Left colon (tissue), 2 donors: ENCODE measurements at regions of chr5 and their contacts with region 1.

Region 1: DNA sequence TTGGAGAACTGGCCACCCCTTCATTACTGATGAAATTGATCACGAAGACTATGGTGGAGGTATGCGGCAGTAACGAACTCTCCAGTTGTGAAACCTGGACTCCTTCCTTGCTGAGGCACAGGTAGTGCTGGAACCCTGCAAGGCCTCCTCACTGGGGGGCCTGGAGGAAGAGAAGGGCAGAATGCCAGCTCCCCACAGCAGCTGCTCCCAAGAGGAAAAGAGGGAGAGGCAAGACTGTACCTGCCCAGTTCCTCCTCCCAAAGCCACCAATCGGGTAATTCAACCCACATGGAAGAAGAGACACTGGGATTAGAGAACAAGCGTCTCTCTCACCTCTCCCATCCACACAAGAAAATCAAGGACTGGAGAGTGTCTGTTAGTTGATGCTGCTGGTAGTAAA is 19.1 kb upstream of the TRIO start:
- DNase-seq: no peak
- ATAC-seq: no peak

Region 2: GRCh38 chr5:14174230-14174637 is 50.2 kb after region 1 on chr5:
- intact Hi-C with region 1: no loop called
- DNase-seq: no peak
- ATAC-seq: peak; percentile 26

Region 3: DNA sequence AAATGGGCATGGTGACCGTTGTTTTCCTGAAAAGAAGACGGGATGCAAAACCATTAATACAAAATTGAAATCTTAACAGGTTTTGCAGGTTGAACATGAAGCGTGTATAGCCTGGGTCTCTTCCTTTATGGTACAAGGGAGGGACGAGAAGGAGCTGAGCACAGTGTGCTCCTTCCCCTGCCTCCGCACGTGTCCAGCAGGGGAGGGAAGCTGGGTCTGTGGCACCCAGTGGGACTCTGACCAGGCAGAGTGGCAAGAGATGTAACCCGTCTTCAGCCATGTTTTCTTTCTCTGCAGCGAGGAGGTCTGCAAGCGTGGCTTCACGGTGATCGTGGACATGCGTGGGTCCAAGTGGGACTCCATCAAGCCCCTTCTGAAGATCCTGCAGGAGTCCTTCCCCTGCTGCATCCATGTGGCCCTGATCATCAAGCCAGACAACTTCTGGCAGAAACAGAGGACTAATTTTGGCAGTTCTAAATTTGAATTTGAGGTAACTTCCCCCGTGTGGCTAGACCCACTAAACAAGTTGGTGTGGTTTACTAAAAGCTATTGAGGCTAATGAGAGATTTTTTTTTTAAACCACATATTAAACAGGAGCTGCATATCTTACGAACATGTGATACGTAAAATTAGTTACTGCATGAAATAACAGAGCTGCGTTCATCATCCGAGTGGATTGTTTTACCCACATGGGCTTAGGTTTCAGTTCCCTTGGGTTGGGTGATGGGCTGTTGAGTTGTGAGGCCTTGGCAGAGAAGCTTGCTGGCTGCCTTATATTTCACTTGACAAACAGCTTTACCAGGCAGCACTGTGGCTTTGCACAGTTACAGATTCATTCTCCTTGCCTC is 162.8 kb after region 1 on chr5:
- intact Hi-C with region 1: loop called in 1 of 2 experiments (anchors 10 kb)
- DNase-seq: no peak
- ATAC-seq: no peak